Endothelial cell of umbilical vein (primary cell): ENCODE measurements at regions of chr19 and their contacts with region 1.

Region 1: DNA sequence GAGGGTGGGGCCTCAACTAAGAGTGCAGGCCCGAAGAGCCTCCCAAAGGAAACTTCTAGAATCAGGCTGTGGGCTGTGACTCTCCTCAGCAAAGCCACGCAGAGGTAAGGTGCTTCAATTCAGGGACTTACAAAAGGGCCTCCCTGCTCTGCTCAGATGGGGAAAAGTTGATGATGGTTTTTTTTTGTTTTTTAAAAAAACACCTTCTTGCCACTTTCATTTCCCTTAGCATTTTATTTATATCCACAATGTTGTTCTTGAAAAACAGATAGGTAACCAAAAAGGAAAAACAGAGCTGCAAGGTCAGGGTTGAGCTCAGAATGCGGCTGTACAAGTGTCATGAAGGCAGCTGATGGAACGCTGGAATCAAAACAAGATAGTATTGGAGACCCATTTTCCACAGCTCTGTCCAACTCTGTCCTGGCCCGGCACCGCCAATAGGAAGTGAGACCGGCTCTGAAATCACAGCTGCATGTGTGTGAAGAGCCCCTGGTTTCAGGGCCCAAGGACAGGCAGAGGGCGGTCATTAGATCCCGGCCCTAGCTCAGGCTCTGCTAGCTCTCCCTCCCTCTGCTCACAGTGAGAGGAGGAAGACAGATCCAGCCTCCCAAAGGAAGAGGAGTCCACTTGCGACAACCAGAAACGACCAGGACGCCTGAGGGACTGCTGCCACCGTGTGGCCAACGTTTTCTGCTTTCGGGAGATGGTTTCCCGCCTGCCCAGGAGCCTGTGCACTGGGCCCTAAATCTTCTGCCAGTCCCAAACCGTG is 58.3 kb downstream of the KLF2 start:
- DNase-seq: peak; percentile 86
- H3K4me3 ChIP-seq: no peak overlapping the region
- H3K27ac ChIP-seq: peak overlapping the region; percentile 46
- H3K4me1 ChIP-seq: peaks cover 6% of the 10 kb centered on the region
- H3K27me3 ChIP-seq: no peaks in the 10 kb centered on the region
- CTCF ChIP-seq: peak; percentile 78 to 87
- POLR2A ChIP-seq: no peak

Region 2: GRCh38 chr19:16041299-16041990 is 341.5 kb before region 1 on chr19:
- CTCF ChIA-PET with region 1: interaction called, 14 read pairs
- POLR2A ChIA-PET with region 1: no interaction called
- dilution Hi-C with region 1: no loop called
- intact Hi-C with region 1: loop called (anchors 1 kb)
- DNase-seq: peak; percentile 74
- H3K4me3 ChIP-seq: no peak overlapping the region
- H3K27ac ChIP-seq: no peak overlapping the region
- H3K4me1 ChIP-seq: peaks cover 12% of the 10 kb centered on the region
- H3K27me3 ChIP-seq: no peaks in the 10 kb centered on the region
- CTCF ChIP-seq: peak; percentile 91 to 95
- POLR2A ChIP-seq: no peak

Region 3: DNA sequence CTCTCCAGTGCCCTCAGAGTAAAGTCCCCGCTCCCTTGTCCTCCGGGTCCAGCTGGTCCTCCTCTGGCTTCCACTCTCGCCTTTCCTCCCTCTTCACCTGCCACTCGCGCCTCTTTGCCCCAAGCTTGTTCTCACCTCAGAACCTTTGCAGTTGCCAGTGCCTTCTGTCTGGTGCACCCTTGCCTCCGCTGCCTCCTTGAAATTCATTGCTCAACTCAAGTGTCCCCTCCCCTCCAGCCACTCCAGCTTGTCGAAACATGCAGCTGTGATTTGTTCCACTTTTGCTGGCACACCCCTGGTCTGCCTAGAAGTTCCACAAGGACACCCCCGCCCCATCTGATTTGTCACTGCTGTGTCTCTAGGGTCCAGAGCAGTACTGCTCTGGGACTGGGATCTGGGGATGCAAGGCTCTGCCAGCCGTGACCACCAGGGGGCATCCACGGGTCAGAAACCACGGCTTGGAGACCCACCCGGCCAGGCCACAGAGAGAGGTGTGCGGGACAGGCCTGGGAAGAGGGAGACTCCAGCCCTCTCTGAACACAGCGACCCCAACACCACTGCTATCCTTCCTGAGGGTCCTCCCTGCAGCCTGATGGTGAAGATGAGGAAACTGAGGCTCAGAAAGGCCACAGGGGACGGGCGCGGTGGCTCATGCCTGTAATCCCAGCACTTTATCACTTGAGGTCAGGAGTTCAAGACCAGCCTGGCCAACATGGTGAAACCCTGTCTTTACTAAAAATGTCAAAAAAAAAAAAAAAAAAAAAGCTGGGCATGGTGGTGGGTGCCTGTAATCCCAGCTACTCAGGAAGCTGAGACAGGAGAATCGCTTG is 135.4 kb before region 1 on chr19:
- CTCF ChIA-PET with region 1: interaction called, 186 read pairs
- POLR2A ChIA-PET with region 1: interaction called, 3 read pairs
- dilution Hi-C with region 1: no loop called
- intact Hi-C with region 1: loop called (anchors 1 kb)
- DNase-seq: peak; percentile 78
- H3K4me3 ChIP-seq: no peak overlapping the region
- H3K27ac ChIP-seq: no peak overlapping the region
- H3K4me1 ChIP-seq: no peaks in the 10 kb centered on the region
- H3K27me3 ChIP-seq: no peaks in the 10 kb centered on the region
- CTCF ChIP-seq: peak; percentile 94 to 95
- POLR2A ChIP-seq: no peak

Region 4: DNA sequence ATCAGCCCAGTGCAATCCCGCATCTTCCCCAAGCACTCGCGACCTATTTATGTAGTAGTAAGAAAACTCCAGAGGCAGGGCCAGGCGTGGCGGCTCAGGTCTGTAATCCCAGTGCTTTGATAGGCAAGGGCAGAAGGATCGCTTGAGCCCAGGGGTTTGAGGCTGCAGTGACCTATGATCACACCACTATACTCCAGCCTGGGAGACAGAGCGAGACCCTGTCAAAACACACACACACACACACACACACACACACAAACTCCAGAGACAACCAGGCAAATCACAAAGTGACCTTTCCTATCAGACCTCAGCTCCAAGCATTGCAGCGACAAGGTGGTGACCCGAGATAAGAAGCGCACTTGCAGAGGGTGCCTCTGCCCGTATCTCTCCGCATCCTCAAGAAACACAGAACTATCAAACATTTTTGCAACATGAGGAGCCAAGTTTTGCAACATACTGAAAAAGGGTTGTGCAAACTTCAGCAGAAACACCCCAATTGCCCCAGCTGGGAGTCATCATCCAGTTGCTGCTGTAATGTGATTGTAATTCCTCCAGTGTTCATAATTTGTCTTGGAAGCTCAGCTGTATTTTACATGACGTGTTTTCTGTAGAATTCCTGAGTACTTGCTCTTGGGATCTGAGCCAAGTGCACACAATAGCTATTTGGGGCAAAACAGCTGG is 67.0 kb before region 1 on chr19:
- CTCF ChIA-PET with region 1: interaction called, 15 read pairs
- POLR2A ChIA-PET with region 1: no interaction called
- dilution Hi-C with region 1: no loop called
- intact Hi-C with region 1: no loop called
- DNase-seq: no peak
- H3K4me3 ChIP-seq: peak overlapping the region in 1 of 3 experiments; percentile 1
- H3K27ac ChIP-seq: peak overlapping the region; percentile 88
- H3K4me1 ChIP-seq: peaks cover 20% of the 10 kb centered on the region
- H3K27me3 ChIP-seq: no peaks in the 10 kb centered on the region
- CTCF ChIP-seq: no peak
- POLR2A ChIP-seq: no peak

Region 5: GRCh38 chr19:16338470-16339360 is 44.2 kb before region 1 on chr19:
- CTCF ChIA-PET with region 1: interaction called, 43 read pairs
- POLR2A ChIA-PET with region 1: no interaction called
- dilution Hi-C with region 1: no loop called
- intact Hi-C with region 1: loop called (anchors 1 kb)
- DNase-seq: peak; percentile 86
- H3K4me3 ChIP-seq: no peak overlapping the region
- H3K27ac ChIP-seq: peak overlapping the region; percentile 91
- H3K4me1 ChIP-seq: peaks cover 34% of the 10 kb centered on the region
- H3K27me3 ChIP-seq: no peaks in the 10 kb centered on the region
- CTCF ChIP-seq: peak in 1 of 2 donors; percentile 4
- POLR2A ChIP-seq: no peak

Region 6: DNA sequence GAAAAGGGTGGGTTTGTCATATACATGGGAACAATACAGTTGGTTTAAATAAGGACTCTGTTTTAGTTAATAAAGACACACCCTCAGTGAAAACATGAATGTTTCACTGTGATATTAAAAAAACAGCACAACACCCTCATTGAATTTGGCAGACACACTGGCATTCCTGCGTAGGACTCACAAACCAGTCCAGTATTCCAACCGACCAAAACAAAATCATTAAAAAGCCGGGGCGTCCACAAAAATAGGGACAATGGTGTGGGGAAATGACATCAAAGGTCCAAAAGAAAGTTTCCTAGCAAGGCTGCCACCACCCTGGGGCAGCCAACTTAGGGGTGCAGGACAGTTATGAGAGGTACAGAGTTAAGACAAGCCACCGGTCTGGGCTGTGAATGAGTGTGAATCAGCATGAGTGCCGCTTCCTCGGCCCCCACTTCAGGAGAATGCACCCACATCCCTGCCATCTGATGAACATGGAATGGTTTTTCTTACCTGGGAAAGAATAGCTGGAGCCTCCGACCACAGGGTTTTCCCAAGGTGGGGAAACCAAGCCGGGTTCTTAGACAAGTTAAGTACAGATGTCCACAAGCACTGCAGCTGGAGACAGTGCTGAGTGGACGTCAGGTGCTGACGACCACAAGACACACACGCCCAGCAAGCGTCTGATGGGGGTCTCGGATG is 15.0 kb after region 1 on chr19:
- CTCF ChIA-PET with region 1: interaction called, 11 read pairs
- POLR2A ChIA-PET with region 1: no interaction called
- dilution Hi-C with region 1: no loop called
- intact Hi-C with region 1: no loop called
- DNase-seq: peak; percentile 59
- H3K4me3 ChIP-seq: no peak overlapping the region
- H3K27ac ChIP-seq: no peak overlapping the region
- H3K4me1 ChIP-seq: no peaks in the 10 kb centered on the region
- H3K27me3 ChIP-seq: no peaks in the 10 kb centered on the region
- CTCF ChIP-seq: no peak
- POLR2A ChIP-seq: no peak

Region 7: GRCh38 chr19:16457195-16457953 is 74.4 kb after region 1 on chr19:
- CTCF ChIA-PET with region 1: no interaction called
- POLR2A ChIA-PET with region 1: no interaction called
- dilution Hi-C with region 1: no loop called
- intact Hi-C with region 1: no loop called
- DNase-seq: peak; percentile 84
- H3K4me3 ChIP-seq: no peak overlapping the region
- H3K27ac ChIP-seq: peak overlapping the region; percentile 66
- H3K4me1 ChIP-seq: peaks cover 19% of the 10 kb centered on the region
- H3K27me3 ChIP-seq: no peaks in the 10 kb centered on the region
- CTCF ChIP-seq: no peak
- POLR2A ChIP-seq: peak; percentile 38

Region 8: GRCh38 chr19:16482736-16483135 is 99.8 kb after region 1 on chr19:
- CTCF ChIA-PET with region 1: no interaction called
- POLR2A ChIA-PET with region 1: no interaction called
- dilution Hi-C with region 1: no loop called
- intact Hi-C with region 1: no loop called
- DNase-seq: no peak
- H3K4me3 ChIP-seq: no peak overlapping the region
- H3K27ac ChIP-seq: no peak overlapping the region
- H3K4me1 ChIP-seq: no peaks in the 10 kb centered on the region
- H3K27me3 ChIP-seq: no peaks in the 10 kb centered on the region
- CTCF ChIP-seq: no peak
- POLR2A ChIP-seq: no peak